Activated naive CD4-positive, alpha-beta T cell treated with anti-CD3 and anti-CD28 coated beads, Interleukin-2, amount 10 ng/mL, durations not matched to agents 7 days and 5 days (primary cell): ENCODE measurements at regions of chr1 and their contacts with region 1.

Region 1: DNA sequence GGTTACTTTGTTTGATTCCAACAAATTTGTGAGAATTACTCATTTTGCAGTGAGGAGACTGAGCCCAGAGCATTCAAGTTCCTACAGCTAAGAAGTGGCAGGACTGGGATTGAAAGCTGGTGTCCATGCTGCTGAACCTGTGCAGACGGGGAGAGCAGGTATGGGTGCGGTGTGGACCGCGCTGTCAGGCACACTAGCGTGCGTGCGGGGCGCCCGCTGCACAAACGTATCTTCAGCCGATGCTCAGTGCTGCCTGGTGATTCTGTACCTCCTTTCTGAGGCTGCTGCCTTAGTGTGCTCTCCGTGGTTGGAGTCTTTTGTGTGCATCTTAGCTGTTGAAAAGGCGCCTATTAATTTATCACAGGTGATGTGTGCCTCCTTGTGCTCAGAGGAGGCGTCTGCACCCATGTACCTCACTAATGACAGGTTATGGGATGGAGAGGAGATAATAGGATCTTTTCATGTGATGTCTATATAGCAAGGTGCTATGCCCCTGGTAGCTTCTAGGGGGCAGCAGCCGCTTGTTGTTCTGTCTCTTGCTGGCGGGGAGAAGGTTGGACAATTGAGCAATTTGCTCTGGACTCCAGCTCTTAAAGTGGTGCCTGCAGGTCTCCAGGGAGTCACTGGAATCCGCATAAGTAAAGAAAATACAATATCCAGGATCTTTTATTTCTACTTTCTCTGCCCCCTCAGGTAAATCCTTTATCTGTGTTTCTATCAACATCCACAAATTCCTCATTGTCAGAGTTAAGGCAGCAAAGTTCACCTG is 32.5 kb downstream of the PEX14 start:
- DNase-seq: peak; percentile 74
- H3K4me3 Mint-ChIP-seq: no peak overlapping the region
- H3K27ac Mint-ChIP-seq: peak overlapping the region; percentile 62
- H3K4me1 Mint-ChIP-seq: peaks cover 62% of the 10 kb centered on the region
- H3K27me3 Mint-ChIP-seq: no peaks in the 10 kb centered on the region

Region 2: GRCh38 chr1:10693497-10694273 is 186.4 kb after region 1 on chr1:
- CTCF ChIA-PET with region 1: interaction called, 11 read pairs
- DNase-seq: peak; percentile 68
- H3K4me3 Mint-ChIP-seq: peak overlapping the region; percentile 88
- H3K27ac Mint-ChIP-seq: peak overlapping the region; percentile 89
- H3K4me1 Mint-ChIP-seq: peaks cover 28% of the 10 kb centered on the region
- H3K27me3 Mint-ChIP-seq: peaks cover 32% of the 10 kb centered on the region